ENCODE measurements at regions of chr15 and their contacts with region 1.

Region 1: GRCh38 chr15:25438601-25439368 is at the start of gene UBE3A:
- DNase-seq: peak; percentile 92
- H3K4me3 ChIP-seq: peak within 1 kb of the TSS; percentile 83 to 99 (median 87)
- H3K27ac ChIP-seq: peak within 1 kb of the TSS; percentile 96 to 100 (median 98)
- H3K4me1 ChIP-seq: peaks cover 18 to 49% (median 46%) of the 10 kb centered on the region in 4 donors
- H3K27me3 ChIP-seq: no peaks in the 10 kb centered on the region
- CTCF ChIP-seq: peak; percentile 29 to 63 (median 60)
- EP300 ChIP-seq: no peak
- POLR2A ChIP-seq: no peak
- total RNA-seq, gene UBE3A: 73.9 to 97.6 (median 80.1) TPM

Region 2: DNA sequence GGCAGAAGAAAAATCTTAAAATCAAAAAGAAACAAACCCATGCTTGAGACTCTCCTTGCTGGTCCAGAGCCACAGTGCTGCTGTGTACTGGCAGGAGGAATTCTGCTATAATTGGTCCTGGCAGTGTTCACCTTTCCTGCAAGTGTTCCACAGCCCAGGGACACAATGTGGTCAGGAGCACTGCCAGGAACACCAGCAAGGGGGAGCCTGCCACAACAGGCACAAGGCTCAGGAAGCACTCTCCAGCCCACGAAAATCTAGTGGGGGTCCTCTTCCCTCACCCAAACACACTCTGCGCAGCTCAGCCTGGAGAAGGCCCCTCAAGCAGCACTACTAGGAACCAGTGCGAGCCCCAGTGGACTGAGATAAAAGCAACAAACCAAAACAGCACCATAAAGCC is 92.8 kb before region 1 on chr15:
- intact Hi-C with region 1: loop called (anchors 5 kb)
- DNase-seq: no peak
- H3K4me3 ChIP-seq: no peak overlapping the region
- H3K27ac ChIP-seq: peak overlapping the region; percentile 54 to 68 (median 65)
- H3K4me1 ChIP-seq: peaks cover 4 to 25% (median 19%) of the 10 kb centered on the region in 4 donors
- H3K27me3 ChIP-seq: no peaks in the 10 kb centered on the region
- CTCF ChIP-seq: peak; percentile 49 to 54 (median 54)
- EP300 ChIP-seq: peak; percentile 25
- POLR2A ChIP-seq: no peak

Measured in esophagus muscularis mucosa (tissue), 4 donors.